GM12878 (cell line): ENCODE measurements at regions of chr6 and their contacts with region 1.

Region 1: GRCh38 chr6:4788953-4789584 is 12.9 kb downstream of the CDYL start:
- DNase-seq: no peak
- ATAC-seq: peak; percentile 97
- H3K4me3 ChIP-seq: peak overlapping the region; percentile 53; the same call in 1 of the 2 replicates
- H3K27ac ChIP-seq: peak overlapping the region; percentile 42
- H3K4me1 ChIP-seq: peaks cover 27% of the 10 kb centered on the region
- H3K27me3 ChIP-seq: no peaks in the 10 kb centered on the region
- CTCF ChIP-seq: peak; percentile 39 to 69 (median 43)
- EP300 ChIP-seq: no peak
- POLR2A ChIP-seq: no peak
- RAD21 ChIP-seq: peak; percentile 21; the same call in 1 of the 2 replicates

Region 2: DNA sequence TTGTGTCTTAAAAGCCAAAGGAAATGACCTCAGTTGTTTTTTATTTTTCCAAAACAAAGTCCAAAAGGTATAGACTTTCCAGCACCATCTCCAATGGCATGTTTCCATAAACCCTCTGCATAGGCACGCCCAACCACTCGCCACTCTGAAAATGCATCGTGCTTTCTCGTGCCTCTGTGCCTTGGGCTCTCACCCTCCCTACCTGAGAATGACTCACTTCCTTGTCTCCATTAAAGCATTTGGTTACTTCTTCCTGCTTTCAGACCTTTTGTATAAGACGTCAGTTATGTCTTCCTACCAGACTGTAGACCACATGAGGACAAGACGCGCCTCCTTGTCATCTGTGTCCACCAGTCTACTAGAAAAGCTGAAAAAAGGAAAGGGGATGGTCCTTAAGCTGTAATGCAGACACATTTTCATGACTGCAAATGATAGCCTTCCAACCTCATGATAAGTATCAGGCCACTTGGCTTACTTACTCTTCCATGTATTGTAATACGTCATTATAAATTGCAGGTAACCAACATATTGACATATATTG is 74.0 kb before region 1 on chr6:
- CTCF ChIA-PET with region 1: no interaction called
- POLR2A ChIA-PET with region 1: no interaction called
- RAD21 ChIA-PET with region 1: no interaction called
- SMC1A ChIA-PET with region 1: no interaction called
- in situ Hi-C with region 1: no loop called
- intact Hi-C with region 1: no loop called
- DNase-seq: no peak
- ATAC-seq: no peak
- H3K4me3 ChIP-seq: no peak overlapping the region
- H3K27ac ChIP-seq: no peak overlapping the region
- H3K4me1 ChIP-seq: no peaks in the 10 kb centered on the region
- H3K27me3 ChIP-seq: no peaks in the 10 kb centered on the region
- CTCF ChIP-seq: no peak
- EP300 ChIP-seq: no peak
- POLR2A ChIP-seq: no peak
- RAD21 ChIP-seq: no peak

Region 3: DNA sequence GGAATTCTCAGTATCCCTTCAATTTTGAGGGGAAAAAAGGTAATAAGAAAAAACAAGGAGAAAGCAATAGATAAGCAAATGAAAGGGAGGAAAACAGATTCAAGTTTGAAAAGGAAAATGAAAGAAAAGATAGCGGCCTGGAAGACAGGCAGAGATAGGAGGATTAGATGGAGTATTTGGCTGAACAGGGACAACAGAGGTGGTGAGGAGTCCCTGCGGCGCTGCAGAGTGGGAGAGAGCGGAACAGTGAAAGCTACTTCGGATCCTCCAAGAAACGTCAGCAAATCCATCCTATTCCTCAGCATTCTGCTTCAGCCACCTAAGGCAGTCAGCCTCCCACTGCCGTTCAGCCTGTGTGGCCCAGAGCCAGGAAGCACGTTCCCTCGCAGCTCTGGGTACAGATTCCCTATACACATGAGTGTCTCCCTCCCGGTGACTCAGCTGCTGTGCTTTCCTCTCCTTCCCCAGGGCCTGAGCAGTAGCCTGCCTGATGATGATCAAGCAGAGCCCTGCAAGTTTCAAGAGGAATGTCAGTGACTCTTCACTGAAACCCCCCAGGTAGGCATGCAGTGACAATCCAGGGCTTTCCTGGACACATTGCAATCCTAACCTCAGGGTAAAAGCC is 56.3 kb before region 1 on chr6:
- CTCF ChIA-PET with region 1: no interaction called
- POLR2A ChIA-PET with region 1: no interaction called
- RAD21 ChIA-PET with region 1: no interaction called
- SMC1A ChIA-PET with region 1: no interaction called
- in situ Hi-C with region 1: no loop called
- intact Hi-C with region 1: no loop called
- DNase-seq: no peak
- ATAC-seq: peak; percentile 27; the same call in 1 of the 3 replicates
- H3K4me3 ChIP-seq: no peak overlapping the region; the same call in 1 of the 2 replicates
- H3K27ac ChIP-seq: no peak overlapping the region
- H3K4me1 ChIP-seq: no peaks in the 10 kb centered on the region; the same call in 1 of the 2 replicates
- H3K27me3 ChIP-seq: no peaks in the 10 kb centered on the region; a peak in 1 of 4 replicates
- CTCF ChIP-seq: no peak
- EP300 ChIP-seq: no peak
- POLR2A ChIP-seq: no peak
- RAD21 ChIP-seq: no peak

Region 4: GRCh38 chr6:4805553-4806336 is 16.7 kb after region 1 on chr6:
- CTCF ChIA-PET with region 1: interaction called, 78 read pairs
- POLR2A ChIA-PET with region 1: interaction called, 65 read pairs
- RAD21 ChIA-PET with region 1: interaction called, 203 read pairs
- SMC1A ChIA-PET with region 1: interaction called, 237 read pairs
- in situ Hi-C with region 1: no loop called
- intact Hi-C with region 1: no loop called
- DNase-seq: no peak
- ATAC-seq: no peak
- H3K4me3 ChIP-seq: no peak overlapping the region
- H3K27ac ChIP-seq: no peak overlapping the region
- H3K4me1 ChIP-seq: peaks cover 46% of the 10 kb centered on the region
- H3K27me3 ChIP-seq: no peaks in the 10 kb centered on the region
- CTCF ChIP-seq: peak; percentile 48 to 70 (median 57); a peak in 5 of 6 replicates
- EP300 ChIP-seq: no peak
- POLR2A ChIP-seq: no peak
- RAD21 ChIP-seq: peak; percentile 48; the same call in 1 of the 2 replicates

Region 5: GRCh38 chr6:4817551-4817950 is 28.5 kb after region 1 on chr6:
- CTCF ChIA-PET with region 1: interaction called, 4 read pairs
- POLR2A ChIA-PET with region 1: interaction called, 7 read pairs
- RAD21 ChIA-PET with region 1: interaction called, 3 read pairs
- SMC1A ChIA-PET with region 1: interaction called, 62 read pairs
- in situ Hi-C with region 1: no loop called
- intact Hi-C with region 1: no loop called
- DNase-seq: no peak
- ATAC-seq: no peak
- H3K4me3 ChIP-seq: no peak overlapping the region
- H3K27ac ChIP-seq: no peak overlapping the region
- H3K4me1 ChIP-seq: peaks cover 21% of the 10 kb centered on the region
- H3K27me3 ChIP-seq: no peaks in the 10 kb centered on the region
- CTCF ChIP-seq: no peak
- EP300 ChIP-seq: no peak
- POLR2A ChIP-seq: no peak
- RAD21 ChIP-seq: no peak